ENCODE measurements at regions of chr6 and their contacts with region 1.

Region 1: GRCh38 chr6:31546962-31547726 is at the start of gene NFKBIL1:
- DNase-seq: peak; percentile 89
- ATAC-seq: peak; percentile 88
- H3K4me3 ChIP-seq: peak within 1 kb of the TSS; percentile 72
- H3K27ac ChIP-seq: peak within 1 kb of the TSS; percentile 64
- H3K4me1 ChIP-seq: peaks cover 23% of the 10 kb centered on the region; the same call in 1 of the 2 replicates
- H3K27me3 ChIP-seq: no peaks in the 10 kb centered on the region
- CTCF ChIP-seq: no peak
- EP300 ChIP-seq: 0 out of 4 replicates have a peak, but pooled peaks of 1 of the 2 experiments have one; percentile 20
- POLR2A ChIP-seq: peak; percentile 69
- RAD21 ChIP-seq: no peak
- polyA plus RNA-seq, gene NFKBIL1: 0.19 to 0.64 TPM

Region 2: GRCh38 chr6:31559958-31560696 is 13.0 kb after region 1 on chr6:
- CTCF ChIA-PET with region 1: interaction called, 27 read pairs
- POLR2A ChIA-PET with region 1: interaction called, 8 read pairs
- RAD21 ChIA-PET with region 1: interaction called, 40 read pairs
- SMC1A ChIA-PET with region 1: interaction called, 1,989 read pairs
- in situ Hi-C with region 1: no loop called
- intact Hi-C with region 1: no loop called
- DNase-seq: peak; percentile 88
- ATAC-seq: peak; percentile 77
- H3K4me3 ChIP-seq: peak overlapping the region; percentile 55; the same call in 1 of the 2 replicates
- H3K27ac ChIP-seq: peak overlapping the region; percentile 99
- H3K4me1 ChIP-seq: peaks cover 79% of the 10 kb centered on the region
- H3K27me3 ChIP-seq: no peaks in the 10 kb centered on the region
- CTCF ChIP-seq: 0 out of 6 replicates have a peak, but pooled peaks of 1 of the 3 experiments have one; percentile 2
- EP300 ChIP-seq: 0 out of 4 replicates have a peak, but pooled peaks of 1 of the 2 experiments have one; percentile 42
- POLR2A ChIP-seq: no peak; the same call in 1 of the 2 replicates
- RAD21 ChIP-seq: peak; percentile 1; the same call in 1 of the 2 replicates

Region 3: GRCh38 chr6:31580807-31581433 is 33.8 kb after region 1 on chr6:
- CTCF ChIA-PET with region 1: interaction called, 2,098 read pairs
- POLR2A ChIA-PET with region 1: interaction called, 164 read pairs
- RAD21 ChIA-PET with region 1: interaction called, 620 read pairs
- SMC1A ChIA-PET with region 1: interaction called, 1,989 read pairs
- in situ Hi-C with region 1: no loop called
- intact Hi-C with region 1: loop called (anchors 2 kb)
- DNase-seq: no peak
- ATAC-seq: peak; percentile 83
- H3K4me3 ChIP-seq: peak overlapping the region; percentile 93
- H3K27ac ChIP-seq: peak overlapping the region; percentile 91
- H3K4me1 ChIP-seq: peaks cover 41% of the 10 kb centered on the region
- H3K27me3 ChIP-seq: no peaks in the 10 kb centered on the region
- CTCF ChIP-seq: peak; percentile 96 to 97 (median 97)
- EP300 ChIP-seq: no peak
- POLR2A ChIP-seq: peak; percentile 87
- RAD21 ChIP-seq: peak; percentile 67

Region 4: GRCh38 chr6:31597006-31597405 is 49.9 kb after region 1 on chr6:
- CTCF ChIA-PET with region 1: interaction called, 2,098 read pairs
- POLR2A ChIA-PET with region 1: interaction called, 72 read pairs
- RAD21 ChIA-PET with region 1: interaction called, 668 read pairs
- SMC1A ChIA-PET with region 1: interaction called, 1,989 read pairs
- in situ Hi-C with region 1: loop called (anchors 5 kb)
- intact Hi-C with region 1: loop called (anchors 1 kb)
- DNase-seq: no peak
- ATAC-seq: peak; percentile 84
- H3K4me3 ChIP-seq: no peak overlapping the region
- H3K27ac ChIP-seq: no peak overlapping the region
- H3K4me1 ChIP-seq: peaks cover 18% of the 10 kb centered on the region
- H3K27me3 ChIP-seq: no peaks in the 10 kb centered on the region
- CTCF ChIP-seq: peak; percentile 45 to 64 (median 56)
- EP300 ChIP-seq: no peak
- POLR2A ChIP-seq: no peak
- RAD21 ChIP-seq: peak; percentile 74

Region 5: GRCh38 chr6:31619805-31620585 is 72.9 kb after region 1 on chr6:
- CTCF ChIA-PET with region 1: interaction called, 17 read pairs
- POLR2A ChIA-PET with region 1: interaction called, 9 read pairs
- RAD21 ChIA-PET with region 1: interaction called, 7 read pairs
- SMC1A ChIA-PET with region 1: interaction called, 12 read pairs
- in situ Hi-C with region 1: no loop called
- intact Hi-C with region 1: no loop called
- DNase-seq: peak; percentile 96
- ATAC-seq: peak; percentile 89
- H3K4me3 ChIP-seq: peak overlapping the region; percentile 70
- H3K27ac ChIP-seq: peak overlapping the region; percentile 98
- H3K4me1 ChIP-seq: peaks cover 21% of the 10 kb centered on the region
- H3K27me3 ChIP-seq: no peaks in the 10 kb centered on the region
- CTCF ChIP-seq: no peak
- EP300 ChIP-seq: peak in 1 of 2 experiments; percentile 35; a peak in 1 of 4 replicates
- POLR2A ChIP-seq: peak; percentile 92
- RAD21 ChIP-seq: no peak

Region 6: GRCh38 chr6:31965700-31966099 is 418.6 kb after region 1 on chr6:
- CTCF ChIA-PET with region 1: no interaction called
- POLR2A ChIA-PET with region 1: no interaction called
- RAD21 ChIA-PET with region 1: no interaction called
- SMC1A ChIA-PET with region 1: no interaction called
- in situ Hi-C with region 1: no loop called
- intact Hi-C with region 1: no loop called
- DNase-seq: no peak
- ATAC-seq: no peak
- H3K4me3 ChIP-seq: no peak overlapping the region
- H3K27ac ChIP-seq: no peak overlapping the region
- H3K4me1 ChIP-seq: peaks cover 5% of the 10 kb centered on the region; the same call in 1 of the 2 replicates
- H3K27me3 ChIP-seq: no peaks in the 10 kb centered on the region
- CTCF ChIP-seq: no peak
- EP300 ChIP-seq: no peak
- POLR2A ChIP-seq: 0 out of 2 replicates have a peak, but pooled peaks have one; percentile 25
- RAD21 ChIP-seq: no peak

Region 7: GRCh38 chr6:32483968-32484636 is 937.0 kb after region 1 on chr6:
- CTCF ChIA-PET with region 1: no interaction called
- POLR2A ChIA-PET with region 1: no interaction called
- RAD21 ChIA-PET with region 1: no interaction called
- SMC1A ChIA-PET with region 1: no interaction called
- in situ Hi-C with region 1: no loop called
- intact Hi-C with region 1: no loop called
- DNase-seq: no peak
- ATAC-seq: no peak; the same call in 2 of the 3 replicates
- H3K4me3 ChIP-seq: no peak overlapping the region
- H3K27ac ChIP-seq: no peak overlapping the region
- H3K4me1 ChIP-seq: no peaks in the 10 kb centered on the region
- H3K27me3 ChIP-seq: no peaks in the 10 kb centered on the region
- CTCF ChIP-seq: no peak
- EP300 ChIP-seq: no peak
- POLR2A ChIP-seq: no peak
- RAD21 ChIP-seq: no peak